Mammary epithelial cell (primary cell): ENCODE measurements at regions of chrX and their contacts with region 1.

Region 1: DNA sequence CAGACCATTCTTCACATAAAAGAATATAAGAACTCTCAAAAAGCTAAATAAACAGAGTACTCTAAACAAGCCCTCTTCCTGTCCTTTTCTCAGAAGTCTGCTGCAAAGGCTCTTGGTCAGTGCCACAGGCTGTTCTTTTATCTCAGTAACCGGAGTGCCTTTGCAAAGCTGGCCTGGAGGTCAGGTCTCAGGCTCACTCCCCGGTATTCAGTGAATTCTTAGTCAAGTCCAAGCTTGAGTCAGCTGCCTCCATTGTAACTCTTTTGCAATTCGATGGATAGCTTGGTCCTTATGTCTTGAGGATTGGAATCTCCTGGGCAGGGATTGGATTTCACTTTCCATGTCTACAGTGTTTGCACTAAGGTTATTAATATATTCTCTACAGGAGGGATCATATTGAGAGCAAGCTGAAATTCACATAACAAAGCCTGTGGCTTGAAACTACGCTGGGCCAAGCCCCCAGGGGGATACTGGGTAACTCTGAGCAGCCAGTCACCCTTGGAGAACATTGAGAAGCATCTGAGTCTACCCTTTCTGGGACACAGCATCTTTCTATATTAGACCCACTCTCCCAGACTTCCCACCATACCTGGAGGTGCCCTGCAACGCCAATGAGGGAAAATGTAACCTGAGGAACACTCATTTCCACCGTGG is 10.0 kb upstream of the HS6ST2 start:
- DNase-seq: no peak
- H3K4me3 ChIP-seq: no peak overlapping the region
- H3K27ac ChIP-seq: no peak overlapping the region
- H3K4me1 ChIP-seq: no peaks in the 10 kb centered on the region
- H3K27me3 ChIP-seq: peaks cover 9% of the 10 kb centered on the region
- CTCF ChIP-seq: no peak

Region 2: GRCh38 chrX:132740316-132741123 is 227.9 kb before region 1 on chrX:
- CTCF ChIA-PET with region 1: no interaction called
- dilution Hi-C with region 1: no loop called
- in situ Hi-C with region 1: no loop called
- intact Hi-C with region 1: loop called (anchors 10 kb)
- DNase-seq: no peak
- H3K4me3 ChIP-seq: no peak overlapping the region
- H3K27ac ChIP-seq: no peak overlapping the region
- H3K4me1 ChIP-seq: peaks cover 3% of the 10 kb centered on the region
- H3K27me3 ChIP-seq: no peaks in the 10 kb centered on the region
- CTCF ChIP-seq: peak; percentile 73 to 75

Region 3: GRCh38 chrX:132957211-132958090 is 11.0 kb before region 1 on chrX:
- CTCF ChIA-PET with region 1: no interaction called
- dilution Hi-C with region 1: no loop called
- in situ Hi-C with region 1: no loop called
- intact Hi-C with region 1: no loop called
- DNase-seq: no peak
- H3K4me3 ChIP-seq: peak overlapping the region in 1 of 3 experiments; percentile 4
- H3K27ac ChIP-seq: no peak overlapping the region
- H3K4me1 ChIP-seq: peaks cover 8% of the 10 kb centered on the region
- H3K27me3 ChIP-seq: peaks cover 26% of the 10 kb centered on the region
- CTCF ChIP-seq: no peak

Region 4: GRCh38 chrX:133005066-133005465 is 36.6 kb after region 1 on chrX:
- CTCF ChIA-PET with region 1: no interaction called
- dilution Hi-C with region 1: no loop called
- in situ Hi-C with region 1: no loop called
- intact Hi-C with region 1: no loop called
- DNase-seq: peak; percentile 1
- H3K4me3 ChIP-seq: no peak overlapping the region
- H3K27ac ChIP-seq: no peak overlapping the region
- H3K4me1 ChIP-seq: no peaks in the 10 kb centered on the region
- H3K27me3 ChIP-seq: no peaks in the 10 kb centered on the region
- CTCF ChIP-seq: peak; percentile 68 to 77